Mucosa of descending colon (tissue), 3 donors: ENCODE measurements at regions of chr9 and their contacts with region 1.

Region 1: DNA sequence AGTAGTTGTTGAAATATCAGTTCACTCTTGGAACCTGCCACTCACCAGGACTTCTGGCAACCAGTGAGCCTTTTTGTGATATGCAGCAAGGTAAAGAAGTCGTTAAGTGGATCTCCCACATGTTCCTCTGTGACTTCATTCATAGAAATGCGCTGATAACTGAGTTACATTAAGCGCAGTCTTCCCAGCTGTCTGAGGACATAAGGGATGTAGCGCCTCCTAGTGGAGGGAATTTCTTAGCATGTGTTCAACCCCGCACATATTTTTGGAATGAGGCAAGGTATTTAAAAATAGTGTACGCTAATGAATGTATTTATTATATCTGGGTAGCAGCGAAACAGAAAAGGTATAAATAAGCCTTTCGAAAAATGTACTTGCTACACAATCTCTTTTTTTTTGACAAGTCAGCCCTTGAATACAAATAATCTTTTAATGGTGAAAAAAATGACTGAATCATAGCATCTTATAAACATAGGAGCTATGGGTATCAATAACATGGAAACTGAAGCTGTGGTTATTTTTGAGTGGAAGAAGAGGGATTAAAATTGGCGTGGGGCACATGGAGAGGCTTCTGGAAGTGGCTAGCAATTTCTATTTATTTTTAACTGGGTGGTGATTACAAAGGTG is 38.0 kb downstream of the PALM2AKAP2 start:
- DNase-seq: peak in 1 of 3 donors; percentile 91
- ATAC-seq: peak; percentile 75
- H3K4me3 ChIP-seq: no peak overlapping the region
- H3K4me1 ChIP-seq: no peaks in the 10 kb centered on the region
- CTCF ChIP-seq: peak; percentile 55

Region 2: DNA sequence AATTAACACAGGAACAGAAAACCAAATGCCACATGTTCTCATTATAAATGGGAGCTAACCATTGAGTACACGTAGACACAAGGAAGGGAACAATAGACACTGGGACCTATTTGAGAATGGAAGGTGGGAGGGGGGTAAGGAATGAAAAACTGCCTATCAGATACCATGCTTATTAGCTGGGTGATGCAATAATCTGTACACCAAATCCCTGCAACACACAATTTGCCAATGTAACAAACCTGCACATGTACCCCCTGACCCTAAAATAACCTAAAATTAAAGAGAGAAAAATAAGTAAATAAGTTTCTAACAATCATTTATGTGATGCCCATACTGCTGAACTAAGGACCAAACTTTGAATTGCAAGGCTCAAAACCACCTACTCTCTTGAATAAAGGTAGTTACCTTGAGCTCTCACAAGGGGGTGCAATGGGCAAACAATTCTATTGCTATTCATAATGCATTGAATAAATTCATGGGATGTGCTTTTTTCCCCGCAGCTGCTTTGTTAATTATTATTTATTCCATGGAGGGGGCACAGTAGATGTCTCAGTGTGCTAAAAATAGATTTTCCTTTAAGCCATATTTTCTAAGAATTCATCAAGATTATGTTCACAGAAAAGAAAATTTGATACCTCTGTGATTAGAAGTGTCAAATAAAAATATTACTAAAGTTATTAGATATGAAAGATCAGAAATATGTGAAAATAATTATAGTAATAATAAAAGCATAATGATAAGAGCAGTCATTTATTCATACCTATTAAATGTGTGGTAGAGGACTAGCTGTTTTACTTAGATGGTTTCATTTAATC is 243.7 kb before region 1 on chr9:
- intact Hi-C with region 1: loop called (anchors 5 kb)
- DNase-seq: peak in 1 of 3 donors; percentile 70
- ATAC-seq: peak; percentile 49
- H3K4me3 ChIP-seq: no peak overlapping the region
- H3K4me1 ChIP-seq: no peaks in the 10 kb centered on the region
- CTCF ChIP-seq: peak; percentile 19

Region 3: DNA sequence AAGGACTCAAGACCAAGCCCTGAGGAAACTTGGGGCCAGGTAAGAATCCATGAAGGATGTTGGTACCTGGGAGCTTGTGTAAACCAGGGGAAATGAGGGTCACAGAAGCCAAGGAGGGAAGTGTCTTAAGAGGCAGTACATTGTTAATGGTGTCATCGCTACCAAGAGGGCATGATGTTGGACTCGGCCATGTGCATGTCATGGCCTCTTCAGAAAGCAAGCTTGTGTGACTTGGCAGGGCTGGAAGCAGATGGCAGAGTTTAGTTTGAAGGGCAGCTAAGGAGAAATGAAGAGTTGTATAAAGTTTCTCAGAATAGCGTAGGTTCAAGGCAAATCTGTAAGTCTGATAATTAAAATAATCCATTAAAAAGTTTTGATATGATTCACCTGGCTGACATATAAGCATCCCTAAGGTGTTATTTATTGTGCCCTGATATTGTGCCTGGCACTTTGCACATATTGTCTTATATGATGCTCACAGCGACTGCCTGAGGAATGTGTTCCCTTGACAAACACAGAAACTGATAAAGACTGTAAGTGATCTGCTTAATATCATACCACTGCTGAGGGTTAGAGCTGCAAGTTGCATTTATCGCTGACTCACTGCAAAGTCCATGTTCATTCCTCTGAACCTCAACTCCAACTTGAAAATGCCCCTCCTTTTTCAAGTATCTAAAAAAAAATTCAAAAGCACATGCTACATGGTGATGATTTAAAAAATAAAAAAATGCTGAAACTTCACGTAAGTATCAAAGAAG is 238.6 kb before region 1 on chr9:
- intact Hi-C with region 1: loop called (anchors 5 kb)
- DNase-seq: no peak
- ATAC-seq: no peak
- H3K4me3 ChIP-seq: no peak overlapping the region
- H3K4me1 ChIP-seq: no peaks in the 10 kb centered on the region
- CTCF ChIP-seq: no peak

Region 4: GRCh38 chr9:109880277-109881169 is 62.6 kb after region 1 on chr9:
- intact Hi-C with region 1: no loop called
- DNase-seq: peak in 1 of 3 donors; percentile 28
- ATAC-seq: peak; percentile 55
- H3K4me3 ChIP-seq: no peak overlapping the region
- H3K4me1 ChIP-seq: no peaks in the 10 kb centered on the region
- CTCF ChIP-seq: peak; percentile 45

Region 5: GRCh38 chr9:109907400-109907799 is 89.4 kb after region 1 on chr9:
- intact Hi-C with region 1: no loop called
- DNase-seq: peak; percentile 55 to 60 (median 59)
- ATAC-seq: peak; percentile 80
- H3K4me3 ChIP-seq: no peak overlapping the region
- H3K4me1 ChIP-seq: peaks cover 27% of the 10 kb centered on the region
- CTCF ChIP-seq: no peak